ENCODE measurements at regions of chr2 and their contacts with region 1.

Region 1: DNA sequence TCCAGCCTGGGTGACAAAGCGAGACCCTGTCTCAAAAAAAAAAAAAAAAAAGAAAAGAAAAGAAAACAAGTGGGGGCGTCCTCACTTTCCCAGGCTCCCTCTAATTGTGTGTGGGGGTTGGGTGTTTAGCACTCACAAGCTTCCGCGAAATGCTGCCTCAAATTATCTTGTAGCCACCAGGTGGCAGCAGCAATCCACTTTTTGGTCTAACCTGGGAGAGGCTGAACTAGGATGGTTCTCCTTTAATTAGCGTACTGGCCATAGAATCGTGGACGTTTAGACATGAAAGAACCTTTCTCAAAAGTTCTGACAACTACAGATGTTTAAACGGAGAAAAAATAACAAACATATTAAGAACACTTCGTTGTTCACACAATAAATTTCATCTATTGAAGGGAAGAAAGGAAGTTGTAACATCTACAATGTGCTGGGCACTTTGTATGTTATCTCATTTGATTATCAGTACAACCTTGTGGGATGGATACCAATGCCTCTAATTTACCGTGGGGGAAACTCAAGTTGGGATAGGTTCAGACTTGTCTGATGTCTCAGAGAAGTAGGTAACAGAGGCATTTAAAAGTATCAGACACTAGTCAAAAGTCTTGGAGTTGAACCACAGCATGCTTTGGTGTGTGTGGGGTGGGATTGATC is 122.7 kb upstream of the NABP1 start:
- DNase-seq: peak; percentile 76
- H3K4me3 ChIP-seq: no peak overlapping the region
- H3K27ac ChIP-seq: no peak overlapping the region
- H3K27me3 ChIP-seq: no peaks in the 10 kb centered on the region
- CTCF ChIP-seq: peak; percentile 78

Region 2: DNA sequence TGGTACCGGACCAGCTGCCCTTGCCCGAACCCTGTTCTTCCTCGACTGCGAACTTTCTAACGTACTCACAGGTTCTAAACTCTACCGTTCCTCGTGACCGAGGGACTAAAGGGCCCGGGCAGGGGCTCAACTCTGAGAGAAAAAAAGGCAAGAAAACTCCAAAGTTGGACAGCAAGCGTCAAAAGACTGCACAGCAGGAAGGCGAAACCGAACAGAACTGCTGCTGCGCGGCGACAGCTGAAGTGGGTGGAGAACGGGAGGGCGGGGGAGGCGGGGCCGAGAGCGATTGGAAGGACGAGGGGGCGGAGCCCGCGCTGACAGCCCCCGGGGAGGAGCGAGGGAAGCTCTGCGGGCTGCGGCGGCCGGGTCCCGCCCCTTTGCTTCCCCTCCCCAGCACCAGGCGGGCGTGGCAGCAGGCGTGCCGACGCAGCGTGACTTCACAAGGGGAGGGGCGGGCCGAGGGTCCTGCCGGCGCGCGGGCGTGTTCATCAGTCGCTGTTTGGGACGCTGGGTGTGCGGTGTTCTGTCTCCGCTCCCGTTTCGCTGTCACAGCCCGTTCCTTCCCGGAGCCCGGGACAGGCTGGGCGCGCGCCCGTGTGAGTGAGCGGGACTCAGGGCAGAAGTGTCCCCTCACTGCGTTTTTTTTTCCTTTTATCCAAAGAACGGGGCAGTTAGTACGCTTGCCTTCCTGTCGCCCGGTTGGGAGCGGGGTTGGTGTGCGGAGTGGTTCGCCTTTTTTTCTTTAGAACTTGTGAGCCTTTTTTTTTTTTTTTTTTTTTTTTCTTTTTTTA is 122.6 kb after region 1 on chr2 and contains the start of gene NABP1:
- in situ Hi-C with region 1: loop called (anchors 25 kb)
- DNase-seq: peak; percentile 96
- H3K4me3 ChIP-seq: peak within 1 kb of the TSS; percentile 78
- H3K27ac ChIP-seq: peak within 1 kb of the TSS; percentile 99
- H3K27me3 ChIP-seq: no peaks in the 10 kb centered on the region
- CTCF ChIP-seq: no peak

Measured in brain microvascular endothelial cell (primary cell).